ENCODE measurements at regions of chr21 and their contacts with region 1.

Region 1: DNA sequence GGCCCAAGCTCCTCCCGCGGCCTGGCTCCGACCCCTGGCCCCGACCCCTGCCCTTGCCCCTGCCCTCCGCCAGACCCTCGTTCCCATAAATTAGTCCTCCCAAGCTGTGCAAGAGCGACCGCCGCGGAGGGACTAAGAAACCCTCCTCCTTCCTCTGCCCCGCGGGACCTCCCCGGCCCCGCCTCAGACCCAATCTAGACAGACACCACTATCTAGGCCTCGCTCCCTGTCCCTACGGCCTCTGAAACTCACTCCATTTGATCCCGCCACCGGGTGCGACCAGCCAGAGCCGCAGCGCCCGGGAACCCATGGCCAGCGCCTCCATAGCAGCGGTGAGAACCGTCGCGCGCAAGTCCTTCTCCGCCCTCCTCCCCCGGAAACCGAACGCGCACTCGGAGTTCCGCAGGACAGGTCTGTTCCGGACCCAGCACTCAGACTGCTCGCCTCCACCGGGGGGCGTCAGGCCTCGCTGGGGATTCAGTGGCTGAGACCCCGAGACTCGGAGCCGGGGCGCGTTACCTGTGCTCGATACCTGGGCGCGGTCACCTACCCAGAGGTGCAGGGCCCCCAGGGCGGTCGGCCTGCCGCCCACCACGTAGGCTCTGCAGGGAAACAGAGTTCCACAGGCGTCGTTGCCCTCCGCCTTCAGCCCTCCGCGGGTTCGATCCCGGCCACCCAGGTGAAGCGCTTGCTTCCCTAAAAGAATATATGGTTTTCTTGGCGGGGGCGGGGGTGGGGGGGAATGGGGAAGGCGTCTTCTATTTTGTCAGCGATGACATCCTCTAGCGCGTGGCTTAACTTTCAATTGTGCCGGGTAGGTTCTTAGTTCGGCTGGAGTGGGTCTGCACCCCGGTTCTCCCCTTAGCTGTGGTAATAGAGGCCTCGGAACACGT is at the start of gene MRPL39:
- DNase-seq: peak; percentile 75 to 76
- H3K4me3 ChIP-seq: peak within 1 kb of the TSS; percentile 83
- H3K27ac ChIP-seq: 0 out of 2 replicates have a peak within 1 kb of the TSS, but pooled peaks have one; percentile 44
- H3K4me1 ChIP-seq: no peaks in the 10 kb centered on the region
- H3K27me3 ChIP-seq: no peaks in the 10 kb centered on the region
- CTCF ChIP-seq: peak; percentile 50; the same call in 1 of the 2 replicates
- total RNA-seq, gene MRPL39: 15.5 and 21.2 TPM in 2 replicates

Region 2: DNA sequence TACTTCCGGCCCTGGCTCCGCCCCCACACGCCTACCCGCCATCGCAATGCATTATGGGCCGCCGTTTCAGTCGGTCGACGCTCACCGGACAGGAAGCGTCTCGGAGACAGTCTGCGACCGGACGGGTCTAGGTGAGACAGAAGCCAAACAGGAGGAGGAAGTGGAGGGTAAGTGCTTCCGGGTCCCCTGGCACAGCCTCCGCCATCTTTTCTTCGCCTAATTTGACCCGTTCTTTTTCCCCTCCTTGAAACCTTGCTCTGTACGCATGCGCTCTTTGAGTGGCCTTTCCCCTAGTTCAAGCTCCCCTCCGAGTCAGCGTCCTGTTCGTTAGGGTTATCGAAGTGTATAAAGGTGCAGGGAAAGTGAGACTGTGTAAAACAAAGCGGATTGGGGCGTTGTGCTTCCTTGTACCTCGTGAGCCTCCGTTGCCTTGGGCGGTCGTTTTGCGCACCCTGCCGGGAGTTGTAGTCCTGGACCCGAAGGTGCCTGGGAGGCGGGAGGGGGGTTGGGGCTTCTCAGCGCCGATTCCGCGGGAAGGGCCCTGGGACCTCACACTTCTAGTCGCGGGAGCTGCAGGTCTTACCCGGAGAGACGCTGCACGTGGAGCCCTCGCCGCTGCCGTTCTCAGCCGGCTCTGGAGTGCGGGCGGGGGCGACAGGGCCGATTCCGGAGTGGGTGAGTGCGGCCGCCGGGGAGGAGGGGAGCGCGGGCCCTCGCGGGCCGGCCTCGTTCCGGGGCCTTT is 127.7 kb after region 1 on chr21 and contains the starts of genes ATP5PF and GABPA:
- CTCF ChIA-PET with region 1: no interaction called
- POLR2A ChIA-PET with region 1: no interaction called
- intact Hi-C with region 1: loop called (anchors 1 kb)
- DNase-seq: peak; percentile 90 to 93
- H3K4me3 ChIP-seq: peak within 1 kb of the TSS; percentile 94
- H3K27ac ChIP-seq: peak within 1 kb of the TSS; percentile 98
- H3K4me1 ChIP-seq: peaks cover 13% of the 10 kb centered on the region; the same call in 1 of the 2 replicates
- H3K27me3 ChIP-seq: no peaks in the 10 kb centered on the region
- CTCF ChIP-seq: no peak; the same call in 1 of the 2 replicates
- total RNA-seq, gene ATP5PF: 62.1 and 108 TPM in 2 replicates
- total RNA-seq, gene GABPA: 18.2 and 20.5 TPM in 2 replicates

Region 3: DNA sequence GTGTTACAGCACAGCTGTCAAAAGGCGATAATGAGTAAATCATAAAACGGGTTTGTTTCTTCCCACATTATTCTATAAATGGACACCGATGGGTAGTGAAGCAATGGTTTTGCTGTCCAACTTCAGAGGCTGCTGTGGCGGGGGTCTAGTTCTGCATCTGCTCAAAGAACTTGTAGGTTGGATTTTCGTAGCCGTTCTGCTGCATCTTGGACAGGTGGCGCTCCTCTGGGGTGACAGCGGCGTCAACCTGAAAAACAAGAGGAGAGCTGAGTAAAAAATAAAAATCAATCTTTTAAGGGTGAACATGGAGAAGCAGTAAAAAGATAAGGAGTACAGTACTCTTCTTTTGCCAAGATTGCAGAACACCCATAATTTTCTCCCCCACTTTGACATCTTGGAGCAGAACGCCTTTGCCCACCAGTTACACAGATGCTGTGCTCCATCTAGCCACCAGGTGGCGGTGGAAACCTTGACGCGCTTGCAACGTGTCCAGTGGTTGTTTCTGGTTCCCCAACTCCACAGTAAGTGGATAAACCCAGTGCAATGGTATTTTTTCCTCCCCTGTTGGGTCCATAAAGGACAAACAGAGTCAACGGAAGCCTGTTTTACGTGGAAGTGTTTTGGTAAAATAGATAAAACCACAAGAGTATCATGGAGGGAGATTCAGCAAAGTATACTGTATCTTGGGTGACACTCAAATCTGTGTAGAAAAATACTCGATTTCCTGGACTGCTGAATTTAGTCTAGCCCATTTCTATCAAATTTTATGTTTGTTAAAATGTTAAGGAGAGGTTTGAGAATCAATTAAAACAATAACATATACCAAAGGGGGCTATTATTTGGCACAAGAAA is 274.4 kb after region 1 on chr21:
- CTCF ChIA-PET with region 1: no interaction called
- POLR2A ChIA-PET with region 1: no interaction called
- intact Hi-C with region 1: loop called (anchors 5 kb)
- DNase-seq: peak in 1 of 2 experiments; percentile 41
- H3K4me3 ChIP-seq: no peak overlapping the region
- H3K27ac ChIP-seq: no peak overlapping the region
- H3K4me1 ChIP-seq: no peaks in the 10 kb centered on the region
- H3K27me3 ChIP-seq: no peaks in the 10 kb centered on the region
- CTCF ChIP-seq: peak; percentile 83

Region 4: GRCh38 chr21:26715878-26716506 is 1108.6 kb after region 1 on chr21:
- CTCF ChIA-PET with region 1: no interaction called
- POLR2A ChIA-PET with region 1: no interaction called
- intact Hi-C with region 1: loop called (anchors 1 kb)
- DNase-seq: peak in 1 of 2 experiments; percentile 20
- H3K4me3 ChIP-seq: no peak overlapping the region
- H3K27ac ChIP-seq: no peak overlapping the region
- H3K4me1 ChIP-seq: no peaks in the 10 kb centered on the region
- H3K27me3 ChIP-seq: no peaks in the 10 kb centered on the region
- CTCF ChIP-seq: peak; percentile 69

Measured in PC-9 (cell line).